Right ventricle myocardium inferior (tissue), 1 donor: ENCODE measurements at regions of chr9 and their contacts with region 1.

Region 1: DNA sequence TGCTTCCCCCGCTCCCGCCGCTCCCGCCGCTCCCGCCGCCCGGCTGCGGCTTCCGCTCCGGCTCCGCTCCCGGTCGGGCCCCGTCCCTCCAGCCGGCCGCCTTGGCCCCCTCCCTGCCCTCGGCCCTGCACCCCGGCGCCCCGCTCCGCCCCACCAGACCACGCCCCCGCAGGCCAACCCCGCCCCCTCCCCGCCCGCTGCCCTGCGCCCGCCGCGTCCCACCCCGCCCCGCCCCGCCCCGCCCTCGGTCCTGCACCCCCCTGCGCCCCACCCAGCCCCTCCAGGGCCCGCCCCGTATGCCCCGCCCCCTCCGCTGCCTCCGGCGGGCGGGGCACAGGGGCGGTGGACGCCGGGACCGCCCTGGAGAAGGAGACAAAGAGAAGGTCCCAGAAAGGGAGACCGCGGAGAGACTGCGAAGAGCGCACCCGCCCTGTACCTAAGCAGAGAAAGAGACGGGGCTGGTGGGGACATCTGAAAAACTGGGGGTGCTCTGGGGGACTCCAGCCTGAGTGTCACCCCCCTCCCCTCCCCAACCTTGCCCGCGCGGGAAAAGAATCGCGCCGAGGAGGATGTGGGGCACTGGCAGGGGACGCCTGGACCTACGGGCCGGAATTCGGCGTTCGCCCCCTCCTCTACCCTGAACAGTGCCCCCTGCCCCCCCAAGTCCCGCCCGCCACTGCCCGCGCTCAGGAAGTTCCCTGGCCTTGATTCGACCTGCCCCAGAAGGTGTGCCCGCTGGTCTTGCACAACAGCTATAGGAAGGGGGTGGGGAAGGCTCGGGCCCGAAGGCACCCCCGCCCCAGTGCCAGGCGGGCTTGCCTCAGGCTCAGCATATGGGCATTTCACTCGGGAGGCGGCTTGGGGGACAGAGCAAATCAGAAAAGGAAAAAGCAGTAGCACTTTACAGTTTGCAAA is 42.8 kb upstream of the STXBP1 start:
- DNase-seq: peak; percentile 85
- ATAC-seq: peak; percentile 92

Region 2: DNA sequence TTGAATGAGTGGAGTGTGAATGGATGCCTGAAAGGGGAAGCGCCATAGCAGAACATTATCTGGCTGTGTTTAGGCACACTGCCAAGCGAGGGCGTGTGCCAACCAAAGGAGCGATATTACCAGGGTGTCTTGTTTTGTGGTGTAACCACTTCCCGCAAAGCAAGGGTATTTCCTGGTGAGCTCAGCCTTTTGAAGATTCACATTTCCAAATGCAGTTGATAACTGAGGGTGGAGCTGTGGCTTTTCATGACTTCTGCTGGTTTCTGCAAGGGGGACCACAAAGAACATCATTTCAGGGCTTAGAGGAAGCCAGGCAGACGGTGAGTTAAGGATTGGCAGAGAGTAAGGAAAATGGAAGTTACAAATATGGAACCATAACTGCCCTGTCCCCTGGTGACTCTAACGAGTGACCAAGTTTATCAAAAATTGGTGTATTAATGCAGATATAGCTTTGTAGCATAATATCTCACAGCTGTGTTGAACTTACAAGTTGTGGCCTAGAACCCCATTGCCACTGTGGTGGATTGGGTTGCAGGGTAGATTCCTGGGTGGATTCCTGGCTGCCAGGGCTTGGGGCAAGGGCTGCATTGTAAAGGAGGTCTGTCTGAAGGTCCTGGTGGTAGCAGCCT is 583.2 kb before region 1 on chr9:
- intact Hi-C with region 1: no loop called
- DNase-seq: peak; percentile 83
- ATAC-seq: peak; percentile 57

Region 3: GRCh38 chr9:127450830-127451724 is 118.2 kb before region 1 on chr9 and contains the starts of genes LRSAM1 and RPL12:
- intact Hi-C with region 1: loop called (anchors 5 kb)
- DNase-seq: peak; percentile 98
- ATAC-seq: peak; percentile 78
- total RNA-seq, gene LRSAM1: 52.0 TPM
- total RNA-seq, gene RPL12: 775 TPM

Region 4: DNA sequence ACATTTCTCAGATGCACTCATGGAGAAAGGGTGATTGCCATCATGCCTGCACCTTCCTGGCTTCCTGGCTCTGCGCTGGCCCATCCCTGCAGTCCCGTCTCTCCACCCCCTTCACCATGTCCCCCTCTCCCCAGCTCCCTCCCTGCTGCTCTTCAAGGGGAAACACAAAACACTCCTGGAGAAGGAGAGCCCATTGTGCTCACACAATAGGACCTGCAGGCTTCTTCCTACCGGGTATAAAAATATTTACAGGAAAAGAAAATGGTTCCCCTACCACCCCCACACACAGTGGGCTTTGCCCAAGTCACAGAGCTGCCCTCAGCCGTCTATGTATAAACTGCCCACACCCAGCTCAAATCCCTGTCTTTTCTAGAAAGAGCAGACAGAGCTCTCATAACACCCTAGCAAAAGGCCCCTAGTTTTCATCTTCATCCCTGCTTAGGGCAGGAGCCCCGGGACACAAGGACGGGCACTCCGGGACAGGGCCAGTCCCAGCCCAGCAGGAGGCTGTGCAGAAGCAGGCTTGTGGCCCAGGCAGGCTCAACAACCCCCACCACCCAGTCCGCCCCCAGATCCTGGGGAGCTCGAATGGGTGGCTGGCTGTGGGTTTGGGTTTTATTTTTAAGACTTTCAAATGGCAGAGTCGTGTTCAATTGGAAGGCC is 40.7 kb before region 1 on chr9:
- intact Hi-C with region 1: loop called (anchors 2 kb)
- DNase-seq: peak; percentile 60
- ATAC-seq: no peak